ENCODE measurements at regions of chr6 and their contacts with region 1.

Region 1: DNA sequence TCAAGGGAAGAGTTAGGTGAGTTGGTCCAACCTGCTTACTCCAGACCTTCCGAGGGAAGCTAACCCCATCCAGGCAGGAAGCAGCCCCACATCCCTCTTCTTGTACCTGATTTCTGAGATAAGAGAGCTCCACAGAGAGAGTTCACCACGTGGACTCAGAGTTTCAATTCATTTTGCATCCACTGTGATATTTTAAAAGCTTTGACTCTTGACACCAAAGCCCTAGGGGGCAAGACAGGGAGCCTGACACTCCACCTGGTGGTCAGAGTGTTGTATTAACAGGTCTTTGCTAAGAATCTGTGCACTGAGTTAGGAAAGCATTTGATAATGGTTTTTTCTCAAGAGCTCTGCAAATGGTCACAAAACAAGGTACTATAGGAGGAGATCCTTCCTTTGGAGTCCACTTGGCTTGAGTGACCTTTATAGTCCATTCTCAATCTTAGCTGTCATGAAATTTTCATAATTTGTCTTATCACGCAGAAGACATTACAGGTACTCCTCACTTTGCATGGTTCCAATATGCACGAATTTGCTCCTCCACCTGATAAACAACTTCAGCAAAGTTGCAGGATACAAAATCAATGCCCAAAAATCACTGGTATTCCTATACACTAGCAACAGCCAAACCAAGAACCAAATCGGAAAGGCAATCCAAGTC is 56.2 kb upstream of the RIPOR2 start:
- DNase-seq: peak; percentile 80 to 84 (median 80)
- H3K4me3 ChIP-seq: peak overlapping the region in 1 of 2 donors; percentile 31
- H3K4me3 Mint-ChIP-seq: peak overlapping the region in 7 of 8 donors; percentile 29 to 83 (median 72)
- H3K27ac ChIP-seq: peak overlapping the region; percentile 29
- H3K27ac Mint-ChIP-seq: peak overlapping the region; percentile 75 to 94 (median 83)
- H3K4me1 ChIP-seq: peaks cover 66% of the 10 kb centered on the region
- H3K4me1 Mint-ChIP-seq: peaks cover 61 to 84% (median 75%) of the 10 kb centered on the region in 4 donors
- H3K27me3 ChIP-seq: no peaks in the 10 kb centered on the region
- H3K27me3 Mint-ChIP-seq: no peaks in the 10 kb centered on the region

Region 2: DNA sequence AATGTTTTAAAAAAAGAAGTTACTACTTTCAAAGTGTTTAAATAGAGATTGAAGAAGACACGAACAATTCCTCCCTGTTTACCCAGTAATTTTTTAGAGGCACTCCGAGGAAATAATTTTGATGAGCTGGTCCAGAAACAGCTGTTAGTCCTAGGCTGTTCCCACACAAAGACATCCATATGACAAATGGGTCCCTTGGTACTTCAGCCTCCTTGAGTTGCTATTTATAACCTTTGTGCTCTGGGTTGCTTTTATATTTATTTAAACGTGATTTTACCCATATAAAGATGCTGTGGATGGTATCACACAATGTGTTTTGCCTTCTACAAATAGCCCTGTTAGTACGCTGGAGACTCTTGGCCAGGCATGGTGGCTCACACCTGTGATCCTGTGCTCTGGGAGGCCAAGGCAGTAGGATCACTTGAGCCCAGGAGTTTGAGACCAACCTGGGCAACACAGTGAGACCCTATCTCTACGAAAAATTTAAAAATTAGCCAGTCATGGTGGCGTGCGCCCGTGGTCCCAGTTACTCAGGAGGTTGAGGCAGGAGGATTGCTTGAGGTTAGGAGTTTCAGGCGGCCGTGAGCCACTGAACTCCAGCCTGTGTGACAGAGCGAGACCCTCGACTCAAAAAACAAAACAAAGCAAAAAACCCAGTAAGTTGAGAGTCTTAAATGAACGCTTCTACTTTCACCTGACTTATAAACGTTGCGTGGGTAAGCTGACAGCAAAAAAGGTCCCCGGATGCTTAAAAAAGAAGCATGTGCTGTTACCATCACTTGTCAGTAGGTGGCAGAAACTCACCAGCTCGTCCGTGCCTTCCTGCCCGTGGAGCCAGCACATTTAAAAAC is 136.3 kb before region 1 on chr6:
- CTCF ChIA-PET with region 1: interaction called, 133 read pairs
- POLR2A ChIA-PET with region 1: interaction called, 52 read pairs
- intact Hi-C with region 1: loop called (anchors 1 kb)
- DNase-seq: peak; percentile 76 to 82 (median 77)
- H3K4me3 ChIP-seq: no peak overlapping the region
- H3K4me3 Mint-ChIP-seq: peak overlapping the region in 5 of 8 donors; percentile 1 to 87 (median 26)
- H3K27ac ChIP-seq: peak overlapping the region; percentile 61
- H3K27ac Mint-ChIP-seq: peak overlapping the region; percentile 82 to 92 (median 90)
- H3K4me1 ChIP-seq: peaks cover 53% of the 10 kb centered on the region
- H3K4me1 Mint-ChIP-seq: peaks cover 48 to 58% (median 50%) of the 10 kb centered on the region in 4 donors
- H3K27me3 ChIP-seq: no peaks in the 10 kb centered on the region
- H3K27me3 Mint-ChIP-seq: no peaks in the 10 kb centered on the region

Region 3: GRCh38 chr6:24891004-24891403 is 100.9 kb before region 1 on chr6:
- CTCF ChIA-PET with region 1: interaction called, 20 read pairs
- POLR2A ChIA-PET with region 1: interaction called, 5 read pairs
- intact Hi-C with region 1: no loop called
- DNase-seq: no peak
- H3K4me3 ChIP-seq: no peak overlapping the region
- H3K4me3 Mint-ChIP-seq: peak overlapping the region in 7 of 8 donors; percentile 17 to 66 (median 22)
- H3K27ac ChIP-seq: no peak overlapping the region
- H3K27ac Mint-ChIP-seq: peak overlapping the region; percentile 7 to 85 (median 77)
- H3K4me1 ChIP-seq: peaks cover 92% of the 10 kb centered on the region
- H3K4me1 Mint-ChIP-seq: peaks cover 72 to 94% (median 83%) of the 10 kb centered on the region in 4 donors
- H3K27me3 ChIP-seq: no peaks in the 10 kb centered on the region
- H3K27me3 Mint-ChIP-seq: no peaks in the 10 kb centered on the region

Region 4: DNA sequence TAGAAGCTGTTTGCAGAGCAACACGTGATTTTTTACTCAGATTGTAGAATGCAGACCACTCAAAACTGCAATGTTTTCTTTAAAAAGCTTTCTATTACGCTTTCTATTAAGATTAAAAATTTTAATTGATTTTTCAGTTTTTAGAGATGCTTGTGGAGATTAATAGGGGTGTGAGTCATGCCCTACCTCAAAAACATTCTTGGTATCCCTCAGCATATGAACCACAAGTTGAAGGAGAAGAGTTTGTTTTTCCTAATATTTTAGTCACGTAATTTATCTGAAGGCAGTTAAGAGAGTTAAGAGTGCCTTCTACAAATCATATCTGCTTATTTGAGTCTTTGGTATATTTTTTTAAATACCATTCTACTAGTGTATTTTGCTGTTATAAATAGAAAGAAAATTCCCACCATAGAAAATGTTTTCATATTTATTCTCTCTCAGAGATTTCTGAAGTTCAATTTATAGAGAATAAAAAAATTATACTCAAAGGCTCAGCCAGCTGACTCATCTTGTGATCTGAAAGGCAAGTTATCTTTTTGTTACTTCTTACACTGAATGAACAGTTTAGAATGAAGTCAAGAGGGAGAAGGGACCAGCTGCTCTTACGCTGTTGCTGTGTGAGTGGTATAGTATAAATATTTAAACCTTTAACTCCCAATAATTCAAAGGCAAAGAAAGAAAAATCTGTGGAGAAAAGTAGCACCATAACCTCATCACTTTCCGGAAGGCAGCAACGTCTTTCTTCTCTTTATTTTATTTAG is 63.8 kb before region 1 on chr6:
- CTCF ChIA-PET with region 1: interaction called, 367 read pairs
- POLR2A ChIA-PET with region 1: interaction called, 486 read pairs
- intact Hi-C with region 1: no loop called
- DNase-seq: no peak
- H3K4me3 ChIP-seq: peak overlapping the region; percentile 63 to 67
- H3K4me3 Mint-ChIP-seq: peak overlapping the region; percentile 96 to 100 (median 99)
- H3K27ac ChIP-seq: peak overlapping the region; percentile 53
- H3K27ac Mint-ChIP-seq: peak overlapping the region; percentile 78 to 97 (median 94)
- H3K4me1 ChIP-seq: peaks cover 86% of the 10 kb centered on the region
- H3K4me1 Mint-ChIP-seq: peaks cover 44 to 85% (median 66%) of the 10 kb centered on the region in 4 donors
- H3K27me3 ChIP-seq: no peaks in the 10 kb centered on the region
- H3K27me3 Mint-ChIP-seq: peaks cover 0 to 1% of the 10 kb centered on the region in 2 donors

Region 5: DNA sequence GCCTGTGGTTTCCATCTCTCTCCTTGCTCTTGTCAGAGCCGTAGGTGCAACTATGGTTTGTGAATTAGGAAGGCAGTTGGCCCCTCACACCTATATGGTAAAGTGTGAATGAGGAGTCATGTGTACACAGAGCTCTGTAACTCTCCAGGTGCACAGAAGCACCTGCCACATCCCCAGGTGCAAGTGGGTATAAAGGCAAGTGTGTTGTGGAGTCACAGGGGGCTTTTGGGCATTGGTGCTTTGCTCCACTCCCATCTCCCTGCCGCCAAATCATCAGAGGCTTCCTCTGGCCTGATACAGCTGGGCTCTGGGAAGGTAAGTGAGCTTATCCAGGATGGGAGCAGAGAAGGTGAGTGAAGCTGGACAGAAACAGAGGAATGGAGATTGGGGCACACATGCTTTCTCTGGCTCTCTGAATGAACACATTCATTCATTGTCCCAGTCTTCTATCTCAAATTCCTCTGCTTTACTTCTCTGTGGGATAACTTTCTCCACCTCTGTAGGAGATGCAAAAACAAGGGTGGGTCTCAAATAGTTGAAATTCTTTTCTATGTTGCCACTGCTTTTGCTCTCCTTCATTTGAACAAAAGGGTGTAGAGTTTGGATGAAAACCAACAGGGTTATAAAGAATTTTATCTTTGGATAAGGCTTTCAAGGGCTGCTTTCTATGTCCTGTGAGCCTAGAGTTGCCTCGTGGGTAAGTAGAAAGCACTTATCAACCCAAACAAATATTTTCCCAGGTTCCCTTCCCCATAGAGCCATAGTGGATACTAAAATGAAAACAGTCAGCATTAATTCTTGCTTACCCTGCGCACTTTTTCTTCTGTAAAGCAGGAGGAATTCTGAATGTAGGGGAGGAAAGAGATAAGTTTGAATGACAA is 11.2 kb before region 1 on chr6:
- CTCF ChIA-PET with region 1: interaction called, 100 read pairs
- POLR2A ChIA-PET with region 1: interaction called, 53 read pairs
- intact Hi-C with region 1: no loop called
- DNase-seq: peak in 1 of 5 donors; percentile 61
- H3K4me3 ChIP-seq: no peak overlapping the region
- H3K4me3 Mint-ChIP-seq: peak overlapping the region in 5 of 8 donors; percentile 1 to 55 (median 27)
- H3K27ac ChIP-seq: no peak overlapping the region
- H3K27ac Mint-ChIP-seq: peak overlapping the region; percentile 8 to 79 (median 68)
- H3K4me1 ChIP-seq: peaks cover 60% of the 10 kb centered on the region
- H3K4me1 Mint-ChIP-seq: peaks cover 50 to 83% (median 67%) of the 10 kb centered on the region in 4 donors
- H3K27me3 ChIP-seq: no peaks in the 10 kb centered on the region
- H3K27me3 Mint-ChIP-seq: no peaks in the 10 kb centered on the region

Region 6: DNA sequence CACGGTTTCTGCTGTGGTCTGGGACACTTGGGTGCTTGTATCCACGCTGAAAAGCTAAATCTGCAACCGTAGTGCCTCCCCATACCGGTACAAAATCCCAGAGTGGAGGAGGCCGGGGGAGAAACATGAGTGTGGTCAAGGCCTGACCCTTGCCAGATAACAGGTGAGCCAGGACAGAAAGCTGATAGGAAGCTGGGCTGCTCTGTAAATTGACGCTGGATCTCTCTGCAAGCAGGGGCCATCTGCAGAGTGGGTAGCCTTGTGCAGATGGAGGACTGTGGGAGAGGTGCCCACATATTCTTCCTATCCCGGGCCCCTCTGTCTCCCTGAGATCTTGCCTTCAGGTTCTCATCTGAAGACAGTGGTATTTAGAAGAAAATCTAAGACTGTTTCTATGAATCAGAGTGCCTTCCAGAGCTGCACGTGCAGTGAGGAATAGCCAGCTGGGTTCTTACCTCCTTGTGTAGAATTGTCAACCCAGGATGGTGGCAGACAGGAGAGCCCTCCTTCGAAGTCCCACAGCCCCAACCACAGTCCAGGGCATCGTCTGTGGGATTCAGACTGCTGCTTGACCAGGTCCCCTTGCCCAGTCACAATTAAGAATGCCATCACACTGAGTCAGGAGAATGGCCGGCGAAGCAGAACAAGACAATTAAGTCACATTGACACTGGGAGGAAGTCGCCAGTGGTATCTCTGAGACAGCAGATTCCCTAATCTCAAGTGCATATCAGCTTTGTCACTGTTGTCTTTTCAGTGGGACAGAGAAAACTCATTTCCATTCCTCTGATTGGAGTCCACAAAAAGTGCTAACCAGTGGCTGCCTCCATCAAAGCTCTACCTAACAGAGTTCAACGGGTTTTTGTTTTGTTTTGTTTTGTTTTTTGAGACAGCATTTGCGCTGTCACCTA is 43.8 kb after region 1 on chr6:
- CTCF ChIA-PET with region 1: interaction called, 18 read pairs
- POLR2A ChIA-PET with region 1: no interaction called
- intact Hi-C with region 1: no loop called
- DNase-seq: peak; percentile 34 to 51 (median 37)
- H3K4me3 ChIP-seq: peak overlapping the region; percentile 44 to 68
- H3K4me3 Mint-ChIP-seq: peak overlapping the region; percentile 84 to 93 (median 90)
- H3K27ac ChIP-seq: peak overlapping the region; percentile 69
- H3K27ac Mint-ChIP-seq: peak overlapping the region; percentile 92 to 100 (median 96)
- H3K4me1 ChIP-seq: peaks cover 88% of the 10 kb centered on the region
- H3K4me1 Mint-ChIP-seq: peaks cover 61 to 88% (median 72%) of the 10 kb centered on the region in 4 donors
- H3K27me3 ChIP-seq: no peaks in the 10 kb centered on the region
- H3K27me3 Mint-ChIP-seq: no peaks in the 10 kb centered on the region

Region 7: GRCh38 chr6:25122001-25122400 is 130.1 kb after region 1 on chr6:
- CTCF ChIA-PET with region 1: no interaction called
- POLR2A ChIA-PET with region 1: no interaction called
- intact Hi-C with region 1: no loop called
- DNase-seq: no peak
- H3K4me3 ChIP-seq: no peak overlapping the region
- H3K4me3 Mint-ChIP-seq: no peak overlapping the region
- H3K27ac ChIP-seq: no peak overlapping the region
- H3K27ac Mint-ChIP-seq: no peak overlapping the region
- H3K4me1 ChIP-seq: peaks cover 20% of the 10 kb centered on the region
- H3K4me1 Mint-ChIP-seq: peaks cover 23 to 42% (median 35%) of the 10 kb centered on the region in 4 donors
- H3K27me3 ChIP-seq: no peaks in the 10 kb centered on the region
- H3K27me3 Mint-ChIP-seq: no peaks in the 10 kb centered on the region

Measured in CD4-positive, alpha-beta memory T cell (primary cell).